ENCODE measurements at regions of chr20 and their contacts with region 1.

Region 1: DNA sequence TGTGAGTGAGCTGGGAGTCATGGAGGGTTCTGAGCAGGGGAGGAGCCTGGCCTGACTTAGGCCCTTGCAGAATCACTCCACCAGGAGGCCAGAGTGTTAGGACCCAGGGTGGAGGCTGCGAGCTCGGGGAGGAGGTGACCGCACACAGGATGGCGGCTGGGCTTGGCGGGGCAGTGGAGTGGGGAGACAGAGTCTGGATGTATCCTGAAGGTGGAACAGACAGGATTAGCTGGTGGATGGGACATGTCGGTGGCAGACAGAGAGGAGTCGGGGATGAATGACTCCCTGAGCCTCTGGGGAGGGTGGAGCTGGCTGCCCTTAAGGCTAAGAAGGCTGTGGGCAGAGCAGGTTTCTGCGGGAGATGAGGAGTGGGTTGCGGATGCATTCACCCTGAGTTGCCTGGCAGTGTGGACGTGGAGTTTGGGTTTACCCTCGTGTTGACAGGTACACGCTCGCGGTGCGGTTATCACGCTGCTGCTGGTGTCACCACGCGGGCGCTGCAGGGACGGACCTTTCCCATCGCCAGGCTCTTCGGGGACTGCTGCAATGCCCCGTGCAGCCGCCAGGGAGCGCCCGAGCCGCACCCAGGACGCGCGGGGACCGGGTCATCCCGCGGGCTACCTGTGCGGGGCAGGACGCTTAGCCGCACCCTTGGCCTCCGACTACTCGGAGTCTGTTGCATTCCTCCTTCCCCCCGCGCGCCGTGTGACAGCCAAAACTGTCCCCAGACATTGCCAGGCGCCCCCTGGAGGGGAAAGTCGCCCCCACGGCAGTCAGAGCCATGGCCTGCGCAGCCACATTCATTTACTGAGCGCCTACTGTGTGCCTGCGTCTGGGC is 43.0 kb upstream of the PTGIS start:
- DNase-seq: peak; percentile 88
- ATAC-seq: peak; percentile 68

Region 2: DNA sequence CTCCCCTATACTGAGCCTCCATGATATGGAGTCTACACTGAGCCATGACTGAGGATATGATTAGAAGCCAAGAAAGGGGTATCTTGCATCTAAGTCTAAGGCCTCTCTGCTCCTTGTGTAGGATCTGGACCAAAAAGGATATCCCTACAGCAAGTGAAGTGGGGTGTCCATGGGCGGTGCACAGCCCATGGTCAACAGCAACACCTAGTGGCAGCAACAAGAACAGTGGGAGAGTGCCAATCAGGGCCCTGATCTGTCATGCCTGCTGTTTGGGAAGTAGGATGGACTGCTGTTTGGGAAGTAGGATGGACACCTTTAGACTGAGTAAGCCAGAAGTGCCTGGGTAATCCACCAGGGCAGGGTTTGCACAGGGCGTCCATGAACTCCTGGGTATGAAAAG is 65.3 kb before region 1 on chr20:
- intact Hi-C with region 1: loop called (anchors 5 kb)
- DNase-seq: no peak
- ATAC-seq: no peak

Region 3: DNA sequence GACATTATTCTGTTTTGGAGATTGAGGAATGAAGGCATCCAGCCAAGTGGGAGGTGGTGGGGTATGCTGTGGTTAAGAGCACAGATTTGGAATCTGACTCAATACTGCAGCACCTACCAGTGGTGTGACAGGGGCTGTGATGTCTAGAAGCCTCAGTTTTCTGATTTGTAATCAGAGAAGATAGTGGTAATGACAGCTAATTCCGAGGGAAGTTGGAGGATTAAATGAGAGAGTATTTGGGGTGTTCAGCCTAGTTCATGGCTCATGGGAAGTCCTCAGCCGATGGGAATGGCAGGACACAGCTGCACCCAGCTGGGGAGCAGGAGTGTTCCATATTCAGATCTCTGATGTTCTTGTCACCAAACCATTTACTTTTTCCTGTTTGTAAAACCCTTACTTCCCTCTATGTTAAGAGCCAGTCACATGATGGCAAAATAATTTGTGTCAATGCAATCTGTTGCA is 211.0 kb after region 1 on chr20:
- intact Hi-C with region 1: loop called (anchors 10 kb)
- DNase-seq: peak; percentile 47
- ATAC-seq: peak; percentile 79

Measured in left ventricle myocardium superior (tissue), 1 donor.